Gastrocnemius medialis (tissue), 4 donors: ENCODE measurements at regions of chr6 and their contacts with region 1.

Region 1: GRCh38 chr6:17156112-17156921 is 54.5 kb downstream of the STMND1 start:
- DNase-seq: peak; percentile 27 to 49
- ATAC-seq: peak; percentile 57 to 71
- H3K4me3 ChIP-seq: no peak overlapping the region
- H3K27ac ChIP-seq: no peak overlapping the region
- H3K4me1 ChIP-seq: no peaks in the 10 kb centered on the region
- H3K27me3 ChIP-seq: no peaks in the 10 kb centered on the region
- CTCF ChIP-seq: peak; percentile 75 to 82 (median 82)
- POLR2A ChIP-seq: no peak

Region 2: GRCh38 chr6:17167327-17167979 is 11.1 kb after region 1 on chr6:
- in situ Hi-C with region 1: no loop called
- intact Hi-C with region 1: loop called (anchors 1 kb)
- DNase-seq: peak; percentile 35 to 81
- ATAC-seq: peak; percentile 43 to 75
- H3K4me3 ChIP-seq: no peak overlapping the region
- H3K27ac ChIP-seq: peak overlapping the region; percentile 80 to 92 (median 90)
- H3K4me1 ChIP-seq: peaks cover 26 to 27% of the 10 kb centered on the region in 2 donors
- H3K27me3 ChIP-seq: no peaks in the 10 kb centered on the region
- CTCF ChIP-seq: peak; percentile 51 to 72 (median 60)
- POLR2A ChIP-seq: peak in 1 of 2 donors; percentile 11

Region 3: GRCh38 chr6:17218023-17218748 is 61.9 kb after region 1 on chr6:
- in situ Hi-C with region 1: no loop called
- intact Hi-C with region 1: no loop called
- DNase-seq: no peak
- ATAC-seq: no peak
- H3K4me3 ChIP-seq: no peak overlapping the region
- H3K27ac ChIP-seq: no peak overlapping the region
- H3K4me1 ChIP-seq: peaks cover 7 to 9% of the 10 kb centered on the region in 2 donors
- H3K27me3 ChIP-seq: no peaks in the 10 kb centered on the region
- CTCF ChIP-seq: no peak
- POLR2A ChIP-seq: no peak

Region 4: GRCh38 chr6:17574866-17575560 is 418.7 kb after region 1 on chr6:
- in situ Hi-C with region 1: loop called (anchors 5 to 10 kb)
- intact Hi-C with region 1: no loop called
- DNase-seq: no peak
- ATAC-seq: peak; percentile 82 to 86
- H3K4me3 ChIP-seq: no peak overlapping the region
- H3K27ac ChIP-seq: no peak overlapping the region
- H3K4me1 ChIP-seq: no peaks in the 10 kb centered on the region
- H3K27me3 ChIP-seq: no peaks in the 10 kb centered on the region
- CTCF ChIP-seq: no peak
- POLR2A ChIP-seq: no peak

Region 5: GRCh38 chr6:17803409-17803808 is 647.1 kb after region 1 on chr6:
- in situ Hi-C with region 1: loop called in 3 of 4 experiments (anchors 10 kb)
- intact Hi-C with region 1: loop called (anchors 5 kb)
- DNase-seq: no peak
- ATAC-seq: no peak
- H3K4me3 ChIP-seq: no peak overlapping the region
- H3K27ac ChIP-seq: no peak overlapping the region
- H3K4me1 ChIP-seq: peaks cover 5 to 7% of the 10 kb centered on the region in 2 donors
- H3K27me3 ChIP-seq: no peaks in the 10 kb centered on the region
- CTCF ChIP-seq: no peak
- POLR2A ChIP-seq: no peak

Region 6: GRCh38 chr6:17820055-17820454 is 663.7 kb after region 1 on chr6:
- in situ Hi-C with region 1: loop called in 1 of 4 experiments (anchors 10 kb)
- intact Hi-C with region 1: loop called (anchors 5 kb)
- DNase-seq: peak; percentile 9 to 74
- ATAC-seq: peak; percentile 84 to 99
- H3K4me3 ChIP-seq: no peak overlapping the region
- H3K27ac ChIP-seq: peak overlapping the region; percentile 12 to 51 (median 40)
- H3K4me1 ChIP-seq: peaks cover 3 to 6% of the 10 kb centered on the region in 2 donors
- H3K27me3 ChIP-seq: no peaks in the 10 kb centered on the region
- CTCF ChIP-seq: no peak
- POLR2A ChIP-seq: no peak